WTC11 (cell line): ENCODE measurements at regions of chr7 and their contacts with region 1.

Region 1: DNA sequence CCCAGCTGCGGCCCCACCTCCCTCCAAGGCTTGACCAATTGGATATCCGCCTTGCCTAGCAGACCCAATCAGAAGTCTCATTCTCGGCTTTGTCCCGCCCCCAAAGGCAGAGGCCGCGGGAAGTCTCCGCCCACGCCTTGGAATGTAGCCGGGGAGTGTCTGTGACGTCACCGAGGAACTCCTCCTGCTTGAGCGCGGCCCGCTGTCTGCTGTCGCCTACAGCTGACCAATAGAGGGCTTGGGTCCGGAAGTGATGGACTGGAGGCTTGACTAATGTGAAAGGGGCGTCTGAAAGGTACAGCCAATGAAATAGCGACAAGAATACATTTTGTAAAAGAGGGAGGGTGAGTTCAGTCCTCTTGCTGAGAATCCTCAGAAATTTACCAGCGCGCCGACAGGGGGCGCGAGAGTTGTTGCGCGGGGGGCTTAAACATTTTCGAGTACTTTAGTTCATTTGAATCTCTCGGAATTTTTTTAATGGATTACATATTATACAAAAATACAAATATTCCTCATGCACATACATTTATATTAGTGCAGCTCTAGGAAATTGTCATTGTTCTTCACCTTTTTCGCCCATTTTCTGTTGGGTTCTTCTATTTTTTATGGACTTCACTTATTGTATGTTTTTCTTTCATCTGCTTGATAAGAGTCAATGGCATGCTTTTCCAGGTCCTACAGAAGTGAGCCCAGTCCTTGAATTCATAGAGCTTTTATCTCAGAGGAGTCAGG is 376 bp upstream of the CREB3L2 start:
- DNase-seq: peak; percentile 99
- ATAC-seq: peak; percentile 94
- H3K4me3 Mint-ChIP-seq: peak overlapping the region; percentile 96
- H3K27ac Mint-ChIP-seq: peak overlapping the region; percentile 97
- H3K4me1 Mint-ChIP-seq: peaks cover 30% of the 10 kb centered on the region
- H3K27me3 Mint-ChIP-seq: no peaks in the 10 kb centered on the region
- CTCF ChIP-seq: peak; percentile 75

Region 2: DNA sequence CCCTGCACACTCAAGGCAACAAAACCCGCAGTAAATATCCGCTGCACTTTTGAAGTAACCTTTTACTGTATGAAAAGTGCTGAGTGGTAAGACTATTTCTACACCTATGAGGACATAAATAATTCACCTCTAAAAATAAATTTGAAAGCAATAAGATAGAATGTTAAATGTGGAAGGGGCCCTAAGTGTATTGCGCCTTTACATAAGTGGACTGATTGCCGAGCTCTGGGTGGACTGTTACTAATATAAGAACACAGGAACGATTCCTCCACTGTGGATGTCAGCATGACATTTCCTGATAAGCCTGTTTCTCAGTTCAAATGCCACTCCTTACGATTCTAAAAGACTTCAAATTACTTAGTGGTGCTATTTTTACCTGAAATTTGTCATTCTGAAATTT is 466.7 kb before region 1 on chr7:
- CTCF ChIA-PET with region 1: no interaction called
- POLR2A ChIA-PET with region 1: no interaction called
- DNase-seq: no peak
- ATAC-seq: no peak
- H3K4me3 Mint-ChIP-seq: no peak overlapping the region
- H3K27ac Mint-ChIP-seq: no peak overlapping the region
- H3K4me1 Mint-ChIP-seq: 0 out of 2 replicates have a peak, but pooled peaks cover 7% of the 10 kb centered on the region
- H3K27me3 Mint-ChIP-seq: no peaks in the 10 kb centered on the region
- CTCF ChIP-seq: no peak

Region 3: GRCh38 chr7:138015096-138015495 is 12.8 kb after region 1 on chr7:
- CTCF ChIA-PET with region 1: interaction called, 13 read pairs
- POLR2A ChIA-PET with region 1: no interaction called
- DNase-seq: no peak
- ATAC-seq: peak; percentile 22
- H3K4me3 Mint-ChIP-seq: no peak overlapping the region
- H3K27ac Mint-ChIP-seq: no peak overlapping the region
- H3K4me1 Mint-ChIP-seq: peaks cover 56% of the 10 kb centered on the region
- H3K27me3 Mint-ChIP-seq: no peaks in the 10 kb centered on the region
- CTCF ChIP-seq: no peak